ENCODE measurements at regions of chr10 and their contacts with region 1.

Region 1: DNA sequence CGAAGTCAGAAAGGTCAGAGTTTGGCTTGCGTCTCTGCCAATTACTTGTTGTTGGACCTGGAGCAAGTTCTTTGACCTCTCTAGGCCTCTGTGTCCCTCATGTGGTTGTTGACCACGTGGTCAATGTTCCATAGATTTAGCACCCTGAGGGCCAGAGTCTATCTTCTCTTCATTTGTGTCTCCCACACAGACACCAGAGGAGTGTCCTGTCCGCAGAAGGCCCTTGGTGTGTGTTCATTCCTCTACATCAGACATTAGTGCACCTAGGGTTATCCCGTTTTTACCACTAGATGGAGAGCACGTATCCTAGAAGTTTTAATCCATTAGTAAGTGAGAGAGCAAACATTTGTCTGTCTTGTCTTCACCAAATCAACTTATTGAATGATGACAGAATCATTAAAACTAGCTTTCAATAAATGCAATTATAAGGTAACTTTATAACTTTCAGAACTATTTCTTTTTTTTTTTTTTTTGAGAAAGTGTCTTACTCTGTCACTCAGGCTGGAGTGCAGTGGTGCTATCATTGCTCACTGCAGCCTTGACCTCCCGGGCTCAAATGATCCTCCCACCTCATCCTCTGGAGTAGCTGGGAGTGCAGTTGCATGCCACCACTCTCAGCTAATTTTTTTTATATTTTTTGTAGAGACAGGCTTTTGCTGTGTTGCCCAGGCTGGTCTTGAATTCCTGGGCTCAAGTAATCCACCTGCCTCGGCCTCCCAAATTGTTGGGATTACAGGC is 122.5 kb upstream of the ANKRD1 start:
- DNase-seq: peak; percentile 12
- H3K4me3 ChIP-seq: no peak overlapping the region
- H3K27ac ChIP-seq: no peak overlapping the region
- H3K4me1 ChIP-seq: no peaks in the 10 kb centered on the region
- H3K27me3 ChIP-seq: no peaks in the 10 kb centered on the region
- CTCF ChIP-seq: peak; percentile 39 to 58

Region 2: DNA sequence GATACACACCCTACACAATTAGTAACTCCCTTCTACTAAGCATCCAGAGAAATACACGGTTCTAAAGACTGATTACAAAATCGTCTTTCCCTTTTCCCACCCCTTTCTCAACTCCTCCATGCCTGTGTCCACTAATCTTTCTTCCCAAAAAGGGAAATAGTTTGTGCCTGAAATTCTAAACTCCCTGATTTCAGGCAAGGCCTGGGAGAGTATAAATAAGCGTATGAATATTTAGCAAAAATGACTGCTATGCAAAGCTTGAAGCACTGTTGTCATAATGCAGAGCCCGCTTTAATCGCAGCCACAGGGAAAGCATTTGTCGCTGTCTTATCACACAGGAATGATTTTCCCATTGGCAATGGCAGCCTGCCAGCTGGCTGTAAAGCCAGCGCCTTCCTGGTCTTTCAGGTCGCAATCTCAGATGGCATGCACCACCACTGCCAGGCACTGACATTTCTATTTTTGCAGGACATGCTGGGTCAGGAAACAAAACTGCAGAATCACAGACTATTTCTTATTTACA is 34.3 kb after region 1 on chr10:
- CTCF ChIA-PET with region 1: no interaction called
- dilution Hi-C with region 1: loop called (anchors 5 kb)
- in situ Hi-C with region 1: no loop called
- intact Hi-C with region 1: no loop called
- DNase-seq: peak; percentile 2
- H3K4me3 ChIP-seq: no peak overlapping the region
- H3K27ac ChIP-seq: no peak overlapping the region
- H3K4me1 ChIP-seq: peaks cover 3% of the 10 kb centered on the region
- H3K27me3 ChIP-seq: peaks cover 5% of the 10 kb centered on the region
- CTCF ChIP-seq: no peak

Region 3: GRCh38 chr10:91117505-91117904 is 74.2 kb after region 1 on chr10:
- CTCF ChIA-PET with region 1: no interaction called
- dilution Hi-C with region 1: loop called (anchors 5 kb)
- in situ Hi-C with region 1: no loop called
- intact Hi-C with region 1: no loop called
- DNase-seq: no peak
- H3K4me3 ChIP-seq: no peak overlapping the region
- H3K27ac ChIP-seq: no peak overlapping the region
- H3K4me1 ChIP-seq: no peaks in the 10 kb centered on the region
- H3K27me3 ChIP-seq: peaks cover 4% of the 10 kb centered on the region
- CTCF ChIP-seq: no peak

Measured in mammary epithelial cell (primary cell).